GM18951 (cell line): ENCODE measurements at regions of chrX and their contacts with region 1.

Region 1: GRCh38 chrX:120485638-120486520 is 16.8 kb upstream of the LAMP2 start:
- POLR2A ChIP-seq: peak; percentile 25

Region 2: GRCh38 chrX:119826399-119826959 is 659.4 kb before region 1 on chrX:
- in situ Hi-C with region 1: no loop called
- POLR2A ChIP-seq: no peak

Region 3: GRCh38 chrX:119917877-119918276 is 568.0 kb before region 1 on chrX:
- in situ Hi-C with region 1: no loop called
- POLR2A ChIP-seq: no peak

Region 4: GRCh38 chrX:120769576-120770341 is 283.9 kb after region 1 on chrX:
- in situ Hi-C with region 1: loop called (anchors 25 kb)
- POLR2A ChIP-seq: no peak